Heart right ventricle (tissue), 16 donors: ENCODE measurements at regions of chr4 and their contacts with region 1.

Region 1: DNA sequence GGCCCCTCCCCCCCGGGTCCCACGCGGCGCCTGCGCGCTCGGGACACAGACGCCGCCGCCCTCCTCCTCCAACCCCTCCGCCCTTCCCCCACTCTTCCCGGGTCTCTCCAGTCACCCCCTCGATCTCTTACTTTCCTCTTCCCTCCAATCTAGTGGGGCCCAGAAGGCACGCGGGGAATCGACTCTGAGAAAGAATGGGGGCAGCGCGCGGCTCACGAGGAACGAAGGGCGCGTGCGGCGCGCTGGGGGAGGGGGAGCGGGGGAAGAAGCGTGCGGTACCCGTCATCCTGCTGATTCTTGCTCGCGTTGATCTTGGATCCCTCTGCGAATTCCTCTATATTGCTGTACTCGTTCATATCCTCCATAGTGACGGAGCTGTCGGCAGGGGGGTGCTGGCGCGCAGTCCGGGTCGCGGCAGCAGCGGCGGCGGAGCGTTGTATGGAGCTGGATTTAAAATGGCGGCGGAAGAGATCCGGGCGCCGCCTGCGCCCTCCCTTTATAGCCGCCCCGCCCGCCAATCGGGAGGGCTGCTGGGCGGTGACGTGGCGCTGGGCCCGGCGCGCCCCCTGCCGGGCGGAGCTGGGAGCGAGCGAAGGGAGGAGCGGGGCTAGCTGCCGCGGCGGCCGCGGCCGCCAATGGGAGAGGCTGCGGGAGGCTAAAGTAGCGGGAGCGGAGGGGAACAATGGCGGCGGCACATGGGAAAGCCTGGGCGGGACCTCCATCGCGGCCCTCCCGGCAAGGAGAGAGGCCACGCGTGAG is 1.1 kb downstream of the HNRNPDL start:
- DNase-seq: peak; percentile 91 to 95
- ATAC-seq: peak; percentile 84 to 94 (median 90)
- H3K4me3 ChIP-seq: peak overlapping the region; percentile 80 to 96 (median 89)
- H3K27ac ChIP-seq: peak overlapping the region; percentile 89 to 99 (median 98)
- H3K4me1 ChIP-seq: peaks cover 10 to 62% (median 45%) of the 10 kb centered on the region in 9 donors
- H3K27me3 ChIP-seq: no peaks in the 10 kb centered on the region
- CTCF ChIP-seq: peak; percentile 94 to 99 (median 99)

Region 2: GRCh38 chr4:82284858-82285805 is 144.0 kb before region 1 on chr4:
- intact Hi-C with region 1: loop called in 2 of 10 experiments (anchors 10 kb)
- DNase-seq: peak; percentile 99
- ATAC-seq: peak; percentile 99 to 100 (median 100)
- H3K4me3 ChIP-seq: peak overlapping the region in 9 of 10 donors; percentile 29 to 65 (median 51)
- H3K27ac ChIP-seq: peak overlapping the region in 8 of 10 donors; percentile 6 to 68 (median 48)
- H3K4me1 ChIP-seq: peaks cover 0 to 10% (median 4%) of the 10 kb centered on the region in 9 donors
- H3K27me3 ChIP-seq: no peaks in the 10 kb centered on the region
- CTCF ChIP-seq: peak; percentile 90 to 98 (median 96)

Region 3: DNA sequence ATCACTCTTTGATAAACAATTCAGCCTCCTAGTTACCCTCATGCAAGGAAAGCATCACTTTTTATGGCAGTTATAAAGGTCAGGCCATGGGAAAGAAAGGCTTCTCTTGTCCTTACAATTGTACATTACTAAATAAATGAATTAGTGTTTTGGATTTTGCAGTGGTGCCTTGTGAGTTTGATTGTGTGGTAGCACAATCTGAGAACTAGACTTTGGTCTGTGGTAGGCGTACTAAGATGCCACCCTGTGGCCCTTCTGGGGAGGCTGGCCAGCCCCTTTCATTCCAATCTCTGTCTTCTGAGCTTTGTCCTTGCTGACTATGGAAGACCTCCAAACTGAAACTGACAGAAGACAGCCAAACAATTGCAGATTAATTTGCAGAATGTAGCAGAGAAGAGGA is 40.7 kb before region 1 on chr4:
- intact Hi-C with region 1: loop called in 2 of 10 experiments (anchors 5 kb)
- DNase-seq: no peak
- ATAC-seq: peak in 6 of 8 donors; percentile 52 to 87 (median 72)
- H3K4me3 ChIP-seq: no peak overlapping the region
- H3K27ac ChIP-seq: peak overlapping the region in 3 of 10 donors; percentile 0 to 33 (median 32)
- H3K4me1 ChIP-seq: peaks cover 0 to 12% (median 0%) of the 10 kb centered on the region in 9 donors
- H3K27me3 ChIP-seq: no peaks in the 10 kb centered on the region
- CTCF ChIP-seq: peak in 6 of 9 donors; percentile 14 to 45 (median 43)

Region 4: DNA sequence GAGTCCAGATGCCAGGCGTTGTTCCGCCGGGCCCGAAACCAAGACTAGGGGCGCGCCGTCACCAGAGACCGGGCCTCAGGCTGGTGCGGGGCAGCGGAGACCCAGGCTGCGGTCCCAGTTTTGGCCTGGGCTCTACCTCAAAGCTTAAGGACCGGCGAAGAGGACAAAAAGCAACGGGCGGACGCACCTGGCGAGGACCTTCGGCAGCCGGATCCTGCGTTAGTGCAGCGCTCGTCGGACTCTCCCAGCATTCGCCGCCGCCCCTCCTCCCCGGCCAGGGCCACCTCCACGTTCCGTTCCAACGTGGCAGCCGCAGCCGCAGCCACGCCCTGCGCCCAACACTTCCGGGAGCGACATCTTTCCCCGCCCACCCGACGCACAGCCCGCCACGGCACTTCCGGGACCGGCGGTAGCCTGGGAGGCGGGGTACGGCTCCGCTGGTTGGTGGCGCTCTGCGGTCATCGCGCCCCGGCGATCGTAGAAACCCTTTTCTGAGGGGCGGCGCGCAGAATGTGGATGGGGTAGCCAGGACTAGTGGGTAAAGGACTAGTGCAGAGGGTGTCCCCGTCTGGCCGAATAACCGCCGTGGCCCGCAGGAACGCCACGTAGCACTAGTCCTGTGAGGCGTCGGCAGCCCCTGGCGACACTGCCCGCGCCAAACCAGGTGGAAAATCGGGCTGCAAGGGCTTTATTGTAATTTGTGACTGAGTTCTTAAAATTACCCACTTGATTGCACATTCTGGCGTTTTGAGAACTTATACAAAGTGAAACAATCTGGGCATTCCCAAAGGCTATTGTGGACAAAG is 462.0 kb after region 1 on chr4 and contains the start of gene SEC31A:
- intact Hi-C with region 1: loop called in 2 of 10 experiments (anchors 10 kb)
- DNase-seq: peak; percentile 96 to 97
- ATAC-seq: peak; percentile 98 to 99 (median 99)
- H3K4me3 ChIP-seq: peak within 1 kb of the TSS; percentile 42 to 96 (median 78)
- H3K27ac ChIP-seq: peak within 1 kb of the TSS; percentile 91 to 99 (median 97)
- H3K4me1 ChIP-seq: peaks cover 0 to 48% (median 39%) of the 10 kb centered on the region in 9 donors
- H3K27me3 ChIP-seq: no peaks in the 10 kb centered on the region
- CTCF ChIP-seq: peak in 3 of 9 donors; percentile 18 to 38 (median 27)
- total RNA-seq, gene SEC31A: 86.3 to 163 (median 124) TPM

Region 5: DNA sequence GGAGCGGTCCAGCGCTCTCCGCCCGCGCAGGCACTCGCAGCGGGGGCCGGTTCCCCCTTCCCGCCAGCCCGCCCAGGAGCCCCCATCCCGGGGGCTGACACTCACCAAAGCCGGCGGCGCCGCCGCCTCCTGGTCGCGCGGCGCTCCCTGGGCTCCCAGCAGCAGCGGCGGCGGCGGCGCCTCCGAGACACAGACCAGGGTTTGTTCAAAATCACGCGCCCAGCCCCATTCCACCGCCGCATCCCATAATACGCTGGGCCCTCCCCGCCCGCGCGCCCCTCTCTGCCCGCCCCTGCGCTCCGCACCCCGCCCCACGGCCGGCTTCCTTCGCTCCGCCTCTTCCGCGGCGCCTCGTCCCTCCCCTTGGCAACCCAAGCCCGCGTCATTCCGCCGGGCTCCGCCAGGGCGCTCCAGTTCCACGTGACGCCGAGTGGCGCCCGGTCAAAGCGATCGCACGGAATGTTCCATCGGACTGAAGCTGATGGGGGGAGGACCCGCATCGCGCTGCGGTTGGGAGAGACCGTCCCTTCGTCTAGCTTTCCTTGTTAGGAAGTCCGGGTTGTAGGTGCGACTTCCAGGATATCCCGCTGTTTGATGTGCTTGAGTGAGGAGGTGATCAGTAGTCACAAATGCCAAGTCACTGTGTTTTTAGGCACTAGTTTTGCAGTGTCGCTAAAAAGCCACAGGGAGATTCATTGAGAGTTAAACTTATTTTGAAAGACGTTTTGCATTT is 583.7 kb after region 1 on chr4:
- intact Hi-C with region 1: loop called in 1 of 10 experiments (anchors 10 kb)
- DNase-seq: peak; percentile 96 to 98
- ATAC-seq: peak; percentile 98 to 100 (median 98)
- H3K4me3 ChIP-seq: peak overlapping the region; percentile 66 to 98 (median 79)
- H3K27ac ChIP-seq: peak overlapping the region; percentile 57 to 97 (median 78)
- H3K4me1 ChIP-seq: peaks cover 6 to 45% (median 34%) of the 10 kb centered on the region in 9 donors
- H3K27me3 ChIP-seq: no peaks in the 10 kb centered on the region
- CTCF ChIP-seq: peak; percentile 21 to 66 (median 55)